GM18951 (cell line): ENCODE measurements at regions of chr1 and their contacts with region 1.

Region 1: GRCh38 chr1:233238884-233239431 is 56.6 kb downstream of the PCNX2 start:
- POLR2A ChIP-seq: no peak

Region 2: DNA sequence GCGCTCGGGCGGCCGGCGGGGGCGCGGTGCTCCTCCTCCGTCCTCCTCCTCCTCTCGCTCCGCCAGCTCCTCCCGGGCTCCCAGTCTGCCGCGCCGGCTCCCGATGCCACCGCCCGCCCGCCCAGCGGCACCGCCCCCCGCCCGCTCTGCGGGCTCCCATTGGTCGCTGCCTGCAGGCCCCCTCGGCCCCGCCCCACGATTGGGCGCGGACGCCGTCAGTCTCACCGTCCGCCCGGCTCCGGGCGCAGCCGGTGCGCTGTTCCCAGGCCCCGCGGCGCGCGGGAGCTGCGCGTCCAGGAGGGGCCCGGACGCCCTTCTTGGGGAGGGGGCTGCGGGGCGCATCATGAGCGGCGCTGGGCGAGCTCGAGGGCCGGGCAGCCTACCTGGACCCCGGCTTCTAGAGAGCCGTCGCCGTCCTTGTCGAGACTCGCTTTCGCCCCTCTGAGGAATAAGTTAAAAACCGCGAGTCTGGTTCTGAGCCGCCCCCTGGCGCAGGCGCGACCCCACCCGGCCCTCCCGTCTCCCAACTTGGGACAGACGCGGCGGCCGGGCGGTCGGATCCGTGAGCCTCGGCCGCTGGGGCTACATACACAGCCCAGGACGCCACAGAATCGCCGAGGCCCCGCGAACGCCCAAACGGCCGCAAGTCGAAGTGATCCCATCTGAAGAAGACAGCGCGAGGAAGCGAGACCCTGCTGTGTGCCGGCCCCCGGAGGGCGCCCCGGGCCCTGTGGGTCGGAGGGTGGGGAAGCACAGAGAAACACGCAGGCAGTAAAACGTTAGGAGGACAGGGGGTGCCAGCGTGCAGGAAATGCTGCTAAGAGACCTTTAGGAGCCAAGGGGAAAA is 608.7 kb before region 1 on chr1 and contains the start of gene SIPA1L2:
- in situ Hi-C with region 1: loop called (anchors 10 kb)
- POLR2A ChIP-seq: no peak